Cardiac septum (tissue), 1 donor: ENCODE measurements at regions of chr11 and their contacts with region 1.

Region 1: GRCh38 chr11:125923012-125923579 is 18.8 kb downstream of the DDX25 start:
- DNase-seq: no peak

Region 2: GRCh38 chr11:126268708-126269579 is 345.8 kb after region 1 on chr11 and contains the starts of genes FOXRED1 and SRPRA:
- intact Hi-C with region 1: loop called (anchors 10 kb)
- DNase-seq: peak; percentile 100
- total RNA-seq, gene FOXRED1: 23.0 TPM
- total RNA-seq, gene SRPRA: 77.4 TPM